SK-N-SH (cell line): ENCODE measurements at regions of chr15 and their contacts with region 1.

Region 1: DNA sequence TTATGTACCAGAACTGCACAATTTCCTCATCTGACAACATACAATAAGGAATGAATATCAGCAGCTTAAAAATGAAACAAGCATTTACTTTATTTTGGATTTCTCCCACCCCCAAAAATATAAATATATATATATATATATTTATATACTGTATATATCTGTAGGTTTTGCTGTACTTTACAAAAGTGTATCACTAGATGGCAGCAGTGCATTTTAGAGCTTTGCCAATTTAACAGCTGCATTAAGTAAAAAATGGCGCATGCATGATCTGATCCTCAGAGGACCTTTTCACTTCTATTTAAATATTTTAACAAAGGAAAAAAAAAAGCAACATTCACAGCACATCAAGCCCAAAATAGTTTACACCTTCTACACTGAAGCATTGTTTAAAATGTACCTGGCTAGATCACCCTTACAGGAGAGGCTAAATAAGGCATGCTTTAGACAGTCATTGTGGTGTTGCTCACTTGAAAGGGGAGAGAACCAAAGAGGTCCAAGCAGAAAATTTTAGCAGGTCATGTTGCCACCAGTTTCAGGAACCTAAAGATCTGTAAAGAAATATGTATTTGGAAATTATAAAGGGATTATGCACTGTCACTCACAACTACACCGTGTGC is 72.6 kb downstream of the NPTN start:
- DNase-seq: peak; percentile 42
- H3K4me3 ChIP-seq: no peak overlapping the region
- H3K27ac ChIP-seq: no peak overlapping the region
- H3K4me1 ChIP-seq: peaks cover 0 to 2% of the 10 kb centered on the region in 2 experiments; a peak in 2 of 4 replicates
- H3K27me3 ChIP-seq: no peaks in the 10 kb centered on the region
- CTCF ChIP-seq: peak; percentile 61
- EP300 ChIP-seq: no peak
- RAD21 ChIP-seq: peak; percentile 81

Region 2: GRCh38 chr15:73305331-73306211 is 255.0 kb before region 1 on chr15:
- CTCF ChIA-PET with region 1: interaction called, 15 read pairs
- POLR2A ChIA-PET with region 1: no interaction called
- DNase-seq: peak; percentile 79
- H3K4me3 ChIP-seq: no peak overlapping the region; a peak in 1 of 4 replicates
- H3K27ac ChIP-seq: no peak overlapping the region; a peak in 1 of 4 replicates
- H3K4me1 ChIP-seq: peaks cover 0 to 8% of the 10 kb centered on the region in 2 experiments; a peak in 1 of 4 replicates
- H3K27me3 ChIP-seq: no peaks in the 10 kb centered on the region
- CTCF ChIP-seq: peak; percentile 62
- EP300 ChIP-seq: no peak
- RAD21 ChIP-seq: peak; percentile 90

Region 3: GRCh38 chr15:73573572-73573971 is 13.0 kb after region 1 on chr15:
- CTCF ChIA-PET with region 1: interaction called, 17 read pairs
- POLR2A ChIA-PET with region 1: no interaction called
- DNase-seq: no peak
- H3K4me3 ChIP-seq: no peak overlapping the region
- H3K27ac ChIP-seq: no peak overlapping the region
- H3K4me1 ChIP-seq: peaks cover 0 to 2% of the 10 kb centered on the region in 2 experiments; a peak in 1 of 4 replicates
- H3K27me3 ChIP-seq: no peaks in the 10 kb centered on the region
- CTCF ChIP-seq: no peak
- EP300 ChIP-seq: no peak
- RAD21 ChIP-seq: no peak

Region 4: DNA sequence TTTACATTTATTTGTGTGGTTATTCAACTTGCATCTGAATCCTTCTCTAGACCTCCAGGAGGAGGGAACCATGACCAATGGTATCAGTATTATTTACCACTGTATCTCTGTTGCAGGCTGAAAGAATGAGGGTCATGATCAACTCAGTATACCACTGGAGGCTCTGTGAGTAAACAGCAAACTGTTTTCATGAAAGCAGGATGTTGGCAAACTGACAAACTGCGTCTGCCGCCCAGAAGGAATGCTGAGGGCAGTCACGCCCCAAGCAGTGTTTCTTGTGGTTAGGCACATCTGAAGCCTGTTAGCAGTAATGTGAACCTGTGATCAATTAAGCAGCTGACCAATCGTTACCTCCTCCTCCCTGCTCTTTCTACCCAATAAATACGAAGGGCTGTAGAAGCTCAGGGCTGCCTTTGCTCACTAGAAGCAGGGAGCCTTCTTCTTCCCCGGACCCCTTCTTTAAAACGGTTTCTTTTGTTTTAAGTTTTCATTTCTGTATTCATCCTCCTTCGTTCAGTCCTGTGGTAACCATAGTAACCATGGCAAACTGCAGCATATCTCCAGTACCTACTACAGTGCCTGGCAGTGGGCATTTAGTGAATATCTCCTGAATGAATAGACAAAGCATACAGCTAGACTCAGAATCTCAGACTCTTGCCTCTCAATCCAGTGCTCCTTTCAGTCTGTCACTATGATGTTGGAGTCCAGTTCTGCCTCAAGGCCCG is 79.0 kb after region 1 on chr15:
- CTCF ChIA-PET with region 1: interaction called, 145 read pairs
- POLR2A ChIA-PET with region 1: no interaction called
- DNase-seq: no peak
- H3K4me3 ChIP-seq: no peak overlapping the region
- H3K27ac ChIP-seq: no peak overlapping the region
- H3K4me1 ChIP-seq: no peaks in the 10 kb centered on the region
- H3K27me3 ChIP-seq: no peaks in the 10 kb centered on the region
- CTCF ChIP-seq: no peak
- EP300 ChIP-seq: no peak
- RAD21 ChIP-seq: no peak

Region 5: GRCh38 chr15:73908030-73908821 is 347.6 kb after region 1 on chr15:
- CTCF ChIA-PET with region 1: interaction called, 16 read pairs
- POLR2A ChIA-PET with region 1: no interaction called
- DNase-seq: peak; percentile 86
- H3K4me3 ChIP-seq: no peak overlapping the region; a peak in 1 of 4 replicates
- H3K27ac ChIP-seq: no peak overlapping the region
- H3K4me1 ChIP-seq: peaks cover 0 to 2% of the 10 kb centered on the region in 2 experiments; a peak in 1 of 4 replicates
- H3K27me3 ChIP-seq: no peaks in the 10 kb centered on the region
- CTCF ChIP-seq: peak; percentile 90
- EP300 ChIP-seq: no peak
- RAD21 ChIP-seq: peak; percentile 91